ENCODE measurements at regions of chr7 and their contacts with region 1.

Region 1: GRCh38 chr7:2863461-2864066 is 19.5 kb upstream of the GNA12 start:
- DNase-seq: peak in 6 of 9 donors; percentile 19 to 77 (median 31)
- ATAC-seq: peak; percentile 94
- H3K4me3 ChIP-seq: peak overlapping the region; percentile 14
- H3K4me3 Mint-ChIP-seq: peak overlapping the region in 9 of 10 donors; percentile 41 to 81 (median 68)
- H3K27ac ChIP-seq: peak overlapping the region; percentile 44
- H3K27ac Mint-ChIP-seq: peak overlapping the region; percentile 65 to 96 (median 88)
- H3K4me1 ChIP-seq: peaks cover 7 to 19% of the 10 kb centered on the region in 2 donors
- H3K4me1 Mint-ChIP-seq: peaks cover 12 to 29% (median 19%) of the 10 kb centered on the region in 7 donors
- H3K27me3 ChIP-seq: no peaks in the 10 kb centered on the region
- H3K27me3 Mint-ChIP-seq: no peaks in the 10 kb centered on the region

Region 2: GRCh38 chr7:2844165-2844898 is 19.2 kb before region 1 on chr7 and contains the start of gene GNA12:
- CTCF ChIA-PET with region 1: interaction called, 3 read pairs
- POLR2A ChIA-PET with region 1: no interaction called
- intact Hi-C with region 1: loop called (anchors 1 kb)
- DNase-seq: peak; percentile 94 to 98 (median 98)
- ATAC-seq: peak; percentile 97
- H3K4me3 ChIP-seq: peak within 1 kb of the TSS; percentile 70
- H3K4me3 Mint-ChIP-seq: peak within 1 kb of the TSS; percentile 86 to 98 (median 91)
- H3K27ac ChIP-seq: peak within 1 kb of the TSS; percentile 59
- H3K27ac Mint-ChIP-seq: peak within 1 kb of the TSS; percentile 2 to 89 (median 78)
- H3K4me1 ChIP-seq: peaks cover 12% of the 10 kb centered on the region in 2 donors
- H3K4me1 Mint-ChIP-seq: peaks cover 19 to 49% (median 44%) of the 10 kb centered on the region in 7 donors
- H3K27me3 ChIP-seq: no peaks in the 10 kb centered on the region
- H3K27me3 Mint-ChIP-seq: no peaks in the 10 kb centered on the region
- total RNA-seq, gene GNA12: 18.1 to 25.7 (median 21.0) TPM

Region 3: DNA sequence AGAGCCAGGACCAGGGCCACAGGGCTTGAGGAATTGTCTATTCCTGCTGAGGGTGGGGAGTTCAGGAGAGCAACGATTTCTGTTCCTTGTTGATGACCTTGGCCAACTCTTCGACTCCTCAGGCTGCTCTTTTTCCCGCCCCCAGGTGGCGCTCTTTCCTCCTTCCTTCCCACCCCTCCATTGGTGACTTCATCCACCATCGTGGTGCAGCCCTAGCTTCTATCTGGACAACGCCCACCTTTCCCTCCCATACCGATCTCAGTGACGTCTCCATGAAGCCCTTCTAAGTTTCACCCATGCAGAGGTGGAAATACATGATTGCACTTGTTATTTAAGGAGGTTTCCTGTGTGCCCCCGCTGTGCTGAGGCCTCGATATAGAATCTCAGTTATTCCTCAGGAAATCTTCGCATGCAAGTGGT is 202.2 kb after region 1 on chr7:
- CTCF ChIA-PET with region 1: no interaction called
- POLR2A ChIA-PET with region 1: no interaction called
- intact Hi-C with region 1: loop called (anchors 1 to 10 kb)
- DNase-seq: peak; percentile 32 to 61 (median 50)
- ATAC-seq: peak; percentile 58
- H3K4me3 ChIP-seq: peak overlapping the region; percentile 28
- H3K4me3 Mint-ChIP-seq: peak overlapping the region; percentile 56 to 85 (median 72)
- H3K27ac ChIP-seq: peak overlapping the region; percentile 54
- H3K27ac Mint-ChIP-seq: peak overlapping the region; percentile 68 to 98 (median 91)
- H3K4me1 ChIP-seq: peaks cover 63 to 78% of the 10 kb centered on the region in 2 donors
- H3K4me1 Mint-ChIP-seq: peaks cover 65 to 83% (median 80%) of the 10 kb centered on the region in 7 donors
- H3K27me3 ChIP-seq: no peaks in the 10 kb centered on the region
- H3K27me3 Mint-ChIP-seq: no peaks in the 10 kb centered on the region

Region 4: GRCh38 chr7:3200504-3200903 is 336.9 kb after region 1 on chr7:
- CTCF ChIA-PET with region 1: interaction called, 3 read pairs
- POLR2A ChIA-PET with region 1: no interaction called
- intact Hi-C with region 1: loop called in 1 of 2 experiments (anchors 1 kb)
- DNase-seq: peak in 3 of 9 donors; percentile 5 to 8 (median 8)
- ATAC-seq: no peak
- H3K4me3 ChIP-seq: no peak overlapping the region
- H3K4me3 Mint-ChIP-seq: no peak overlapping the region
- H3K27ac ChIP-seq: no peak overlapping the region
- H3K27ac Mint-ChIP-seq: no peak overlapping the region
- H3K4me1 ChIP-seq: no peaks in the 10 kb centered on the region
- H3K4me1 Mint-ChIP-seq: peaks cover 0 to 4% (median 0%) of the 10 kb centered on the region in 7 donors
- H3K27me3 ChIP-seq: no peaks in the 10 kb centered on the region
- H3K27me3 Mint-ChIP-seq: peaks cover 0 to 13% (median 0%) of the 10 kb centered on the region in 5 donors

Region 5: GRCh38 chr7:3461923-3462322 is 598.4 kb after region 1 on chr7:
- CTCF ChIA-PET with region 1: no interaction called
- POLR2A ChIA-PET with region 1: no interaction called
- intact Hi-C with region 1: loop called (anchors 10 kb)
- DNase-seq: peak; percentile 11 to 91 (median 86)
- ATAC-seq: peak; percentile 96
- H3K4me3 ChIP-seq: peak overlapping the region; percentile 19
- H3K4me3 Mint-ChIP-seq: peak overlapping the region; percentile 21 to 92 (median 81)
- H3K27ac ChIP-seq: peak overlapping the region; percentile 70
- H3K27ac Mint-ChIP-seq: peak overlapping the region; percentile 76 to 96 (median 93)
- H3K4me1 ChIP-seq: peaks cover 15 to 45% of the 10 kb centered on the region in 2 donors
- H3K4me1 Mint-ChIP-seq: peaks cover 20 to 90% (median 77%) of the 10 kb centered on the region in 7 donors
- H3K27me3 ChIP-seq: no peaks in the 10 kb centered on the region
- H3K27me3 Mint-ChIP-seq: no peaks in the 10 kb centered on the region

Region 6: DNA sequence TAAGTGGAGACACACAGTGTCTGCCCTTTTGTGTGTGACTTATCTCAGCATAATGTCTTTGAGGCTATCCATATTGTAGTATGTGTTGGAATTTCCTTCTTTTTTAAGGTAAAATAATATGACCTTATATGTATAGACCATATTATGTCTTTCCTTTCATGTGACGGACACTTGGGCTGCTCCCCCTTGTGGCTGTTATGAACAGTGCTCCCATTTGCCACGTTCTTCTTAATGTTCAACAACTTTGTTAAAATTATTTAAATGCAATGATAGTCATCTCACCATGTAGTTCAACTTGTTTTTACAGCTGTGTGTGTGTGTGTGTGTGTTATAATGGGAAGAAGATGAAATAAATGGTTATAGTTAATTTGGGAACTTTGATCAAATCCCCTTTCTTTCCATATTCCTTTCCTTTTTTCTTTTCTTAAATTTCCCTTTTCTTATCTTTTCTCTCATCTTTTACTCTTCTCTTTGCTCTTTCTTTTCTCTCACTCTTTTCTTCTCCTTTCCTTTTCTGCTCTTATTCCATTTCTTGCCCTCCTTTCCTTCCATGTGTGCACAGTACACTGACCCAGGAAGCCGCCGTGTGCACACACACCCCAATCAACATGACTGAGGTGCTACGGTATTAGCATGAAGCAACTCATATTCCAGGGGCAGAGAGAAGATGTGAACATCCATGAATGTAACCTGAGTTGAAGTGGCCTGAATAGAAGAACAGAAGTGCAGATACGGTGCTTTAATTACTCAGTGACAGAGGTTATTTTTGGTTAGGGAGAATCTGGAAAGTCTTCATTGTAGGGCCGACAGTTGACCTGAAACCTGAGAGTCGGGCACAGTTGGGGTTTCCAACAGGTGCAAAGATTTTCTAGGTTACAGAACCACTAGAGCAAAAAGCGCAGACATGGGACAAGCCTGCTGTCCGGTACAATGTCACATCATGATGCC is 1034.1 kb after region 1 on chr7:
- CTCF ChIA-PET with region 1: interaction called, 4 read pairs
- POLR2A ChIA-PET with region 1: no interaction called
- intact Hi-C with region 1: loop called in 1 of 2 experiments (anchors 1 kb)
- DNase-seq: peak in 7 of 9 donors; percentile 12 to 55 (median 45)
- ATAC-seq: peak; percentile 77
- H3K4me3 ChIP-seq: no peak overlapping the region
- H3K4me3 Mint-ChIP-seq: no peak overlapping the region
- H3K27ac ChIP-seq: no peak overlapping the region
- H3K27ac Mint-ChIP-seq: peak overlapping the region in 1 of 9 donors; percentile 12
- H3K4me1 ChIP-seq: no peaks in the 10 kb centered on the region
- H3K4me1 Mint-ChIP-seq: peaks cover 0 to 9% (median 0%) of the 10 kb centered on the region in 7 donors
- H3K27me3 ChIP-seq: no peaks in the 10 kb centered on the region
- H3K27me3 Mint-ChIP-seq: peaks cover 0 to 9% (median 0%) of the 10 kb centered on the region in 5 donors

Measured in naive thymus-derived CD4-positive, alpha-beta T cell (primary cell).